ENCODE measurements at regions of chr5 and their contacts with region 1.

Region 1: GRCh38 chr5:151157426-151158286 is at the start of gene ANXA6:
- DNase-seq: peak; percentile 58 to 77 (median 66)
- H3K4me3 ChIP-seq: peak within 1 kb of the TSS; percentile 70 to 96 (median 82)
- H3K4me3 Mint-ChIP-seq: peak within 1 kb of the TSS; percentile 86 to 91
- H3K27ac ChIP-seq: peak within 1 kb of the TSS; percentile 67 to 86
- H3K27ac Mint-ChIP-seq: peak within 1 kb of the TSS; percentile 85 to 96 (median 91)
- H3K4me1 ChIP-seq: peaks cover 54 to 69% of the 10 kb centered on the region in 2 donors
- H3K4me1 Mint-ChIP-seq: peaks cover 71% of the 10 kb centered on the region
- H3K27me3 ChIP-seq: no peaks in the 10 kb centered on the region
- H3K27me3 Mint-ChIP-seq: peaks cover 0 to 3% (median 2%) of the 10 kb centered on the region in 3 donors
- CTCF ChIP-seq: no peak
- polyA plus RNA-seq, gene ANXA6: 60.6 to 124 (median 93.5) TPM

Region 2: DNA sequence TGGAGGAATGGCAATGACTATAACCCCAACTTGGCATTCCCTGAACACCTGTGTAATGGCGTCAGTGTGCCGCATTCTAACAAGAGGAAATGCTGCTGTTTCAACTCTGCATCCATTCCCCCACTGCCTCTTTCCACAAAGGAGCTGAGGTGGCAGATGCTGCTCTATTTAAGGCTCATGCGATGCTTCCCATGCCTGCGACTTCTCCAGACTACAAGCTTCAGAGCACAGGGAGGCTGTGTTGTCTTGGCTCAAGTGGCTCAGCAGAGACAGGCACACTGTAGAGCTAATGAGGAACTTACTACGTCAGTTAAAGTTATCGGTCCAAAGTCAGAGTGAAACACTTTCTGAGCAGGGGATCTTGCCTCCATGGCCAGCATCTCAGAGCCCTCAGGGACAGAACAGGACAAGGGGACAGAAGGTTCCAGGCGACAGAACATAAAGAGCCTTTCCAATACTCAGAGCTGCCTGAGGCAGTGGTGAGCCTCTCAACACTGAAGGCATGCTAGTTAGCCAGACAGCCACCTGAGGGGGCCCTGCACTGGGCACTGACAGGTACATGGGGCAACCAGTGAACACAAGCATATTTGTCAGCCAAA is 98.7 kb before region 1 on chr5:
- intact Hi-C with region 1: loop called in 1 of 2 experiments (anchors 5 kb)
- DNase-seq: peak; percentile 72 to 84 (median 84)
- H3K4me3 ChIP-seq: peak overlapping the region in 1 of 3 experiments; percentile 43
- H3K4me3 Mint-ChIP-seq: peak overlapping the region; percentile 62 to 78
- H3K27ac ChIP-seq: peak overlapping the region; percentile 69 to 90
- H3K27ac Mint-ChIP-seq: peak overlapping the region; percentile 96 to 99 (median 99)
- H3K4me1 ChIP-seq: peaks cover 92 to 99% of the 10 kb centered on the region in 2 donors
- H3K4me1 Mint-ChIP-seq: peaks cover 99% of the 10 kb centered on the region
- H3K27me3 ChIP-seq: no peaks in the 10 kb centered on the region
- H3K27me3 Mint-ChIP-seq: peaks cover 0 to 4% (median 0%) of the 10 kb centered on the region in 3 donors
- CTCF ChIP-seq: no peak

Region 3: DNA sequence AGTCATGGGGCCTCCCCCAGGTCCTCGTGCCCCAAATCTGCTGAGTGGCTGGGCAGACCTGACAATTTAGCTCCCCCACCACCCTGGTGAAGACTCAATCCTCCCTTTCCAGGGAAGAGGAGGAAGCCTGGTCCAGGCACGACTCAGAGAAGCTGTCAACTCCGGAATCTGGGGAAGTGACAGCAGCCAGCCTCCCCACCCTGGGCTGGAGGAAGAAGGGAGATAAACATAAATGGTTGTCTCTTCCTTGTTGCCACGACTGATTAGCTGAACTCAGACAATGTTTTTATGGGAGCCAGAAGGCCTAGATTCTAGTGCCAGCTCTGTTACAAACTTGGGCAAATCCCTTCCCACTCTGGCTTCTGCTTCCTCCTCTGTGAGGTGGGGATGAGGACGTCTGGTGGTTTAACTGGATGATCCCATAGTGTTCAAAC is 50.8 kb after region 1 on chr5:
- intact Hi-C with region 1: loop called in 1 of 2 experiments (anchors 5 kb)
- DNase-seq: peak; percentile 44 to 81 (median 63)
- H3K4me3 ChIP-seq: peak overlapping the region in 1 of 3 experiments; percentile 55
- H3K4me3 Mint-ChIP-seq: peak overlapping the region in 1 of 2 donors; percentile 75
- H3K27ac ChIP-seq: peak overlapping the region; percentile 97
- H3K27ac Mint-ChIP-seq: peak overlapping the region; percentile 98 to 100 (median 99)
- H3K4me1 ChIP-seq: peaks cover 61% of the 10 kb centered on the region in 2 donors
- H3K4me1 Mint-ChIP-seq: peaks cover 60% of the 10 kb centered on the region
- H3K27me3 ChIP-seq: no peaks in the 10 kb centered on the region
- H3K27me3 Mint-ChIP-seq: peaks cover 0 to 2% (median 1%) of the 10 kb centered on the region in 3 donors
- CTCF ChIP-seq: no peak

Region 4: GRCh38 chr5:151523335-151523734 is 365.7 kb after region 1 on chr5:
- intact Hi-C with region 1: no loop called
- DNase-seq: peak; percentile 23 to 52 (median 32)
- H3K4me3 ChIP-seq: no peak overlapping the region
- H3K4me3 Mint-ChIP-seq: no peak overlapping the region
- H3K27ac ChIP-seq: no peak overlapping the region
- H3K27ac Mint-ChIP-seq: no peak overlapping the region
- H3K4me1 ChIP-seq: peaks cover 9 to 11% of the 10 kb centered on the region in 2 donors
- H3K4me1 Mint-ChIP-seq: peaks cover 19% of the 10 kb centered on the region
- H3K27me3 ChIP-seq: no peaks in the 10 kb centered on the region
- H3K27me3 Mint-ChIP-seq: no peaks in the 10 kb centered on the region
- CTCF ChIP-seq: peak; percentile 75

Measured in CD14-positive monocyte (primary cell).